Mammary epithelial cell (primary cell): ENCODE measurements at regions of chr10 and their contacts with region 1.

Region 1: GRCh38 chr10:90148116-90148855 is 446.9 kb downstream of the KIF20B start:
- DNase-seq: peak; percentile 78
- H3K4me3 ChIP-seq: no peak overlapping the region
- H3K27ac ChIP-seq: peak overlapping the region; percentile 4
- H3K4me1 ChIP-seq: peaks cover 24% of the 10 kb centered on the region
- H3K27me3 ChIP-seq: no peaks in the 10 kb centered on the region
- CTCF ChIP-seq: peak; percentile 57 to 74

Region 2: GRCh38 chr10:90007226-90007625 is 141.1 kb before region 1 on chr10:
- CTCF ChIA-PET with region 1: no interaction called
- dilution Hi-C with region 1: no loop called
- in situ Hi-C with region 1: loop called in 1 of 2 experiments (anchors 25 kb)
- intact Hi-C with region 1: no loop called
- DNase-seq: peak; percentile 98
- H3K4me3 ChIP-seq: no peak overlapping the region
- H3K27ac ChIP-seq: peak overlapping the region; percentile 92
- H3K4me1 ChIP-seq: peaks cover 18% of the 10 kb centered on the region
- H3K27me3 ChIP-seq: no peaks in the 10 kb centered on the region
- CTCF ChIP-seq: peak; percentile 62 to 89

Region 3: GRCh38 chr10:90062786-90063185 is 85.5 kb before region 1 on chr10:
- CTCF ChIA-PET with region 1: no interaction called
- dilution Hi-C with region 1: no loop called
- in situ Hi-C with region 1: no loop called
- intact Hi-C with region 1: no loop called
- DNase-seq: no peak
- H3K4me3 ChIP-seq: no peak overlapping the region
- H3K27ac ChIP-seq: no peak overlapping the region
- H3K4me1 ChIP-seq: no peaks in the 10 kb centered on the region
- H3K27me3 ChIP-seq: no peaks in the 10 kb centered on the region
- CTCF ChIP-seq: no peak

Region 4: DNA sequence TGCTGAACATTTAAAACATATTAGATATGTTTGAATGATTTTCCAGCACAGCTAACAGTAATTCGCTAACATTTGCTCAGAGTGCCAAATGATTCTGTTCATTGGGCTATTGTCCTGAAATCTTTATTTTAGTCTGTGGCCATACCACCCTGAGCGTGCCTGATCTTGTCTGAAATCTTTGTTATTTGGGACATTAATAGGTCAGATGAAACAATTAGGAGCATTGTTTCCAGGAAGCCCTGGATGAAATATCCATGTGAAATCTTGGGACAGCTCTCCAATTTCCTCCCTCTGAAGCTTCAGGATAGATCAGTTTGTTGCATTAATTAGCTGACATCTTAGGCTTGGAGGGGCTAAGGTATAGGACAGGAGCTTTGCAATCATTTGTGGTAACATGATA is 65.1 kb after region 1 on chr10:
- CTCF ChIA-PET with region 1: no interaction called
- dilution Hi-C with region 1: no loop called
- in situ Hi-C with region 1: no loop called
- intact Hi-C with region 1: no loop called
- DNase-seq: peak; percentile 55
- H3K4me3 ChIP-seq: no peak overlapping the region
- H3K27ac ChIP-seq: no peak overlapping the region
- H3K4me1 ChIP-seq: peaks cover 27% of the 10 kb centered on the region
- H3K27me3 ChIP-seq: no peaks in the 10 kb centered on the region
- CTCF ChIP-seq: no peak

Region 5: GRCh38 chr10:90288391-90288933 is 140.2 kb after region 1 on chr10:
- CTCF ChIA-PET with region 1: no interaction called
- dilution Hi-C with region 1: no loop called
- in situ Hi-C with region 1: no loop called
- intact Hi-C with region 1: loop called (anchors 5 kb)
- DNase-seq: peak; percentile 29
- H3K4me3 ChIP-seq: no peak overlapping the region
- H3K27ac ChIP-seq: no peak overlapping the region
- H3K4me1 ChIP-seq: peaks cover 8% of the 10 kb centered on the region
- H3K27me3 ChIP-seq: no peaks in the 10 kb centered on the region
- CTCF ChIP-seq: peak; percentile 29 to 56

Region 6: DNA sequence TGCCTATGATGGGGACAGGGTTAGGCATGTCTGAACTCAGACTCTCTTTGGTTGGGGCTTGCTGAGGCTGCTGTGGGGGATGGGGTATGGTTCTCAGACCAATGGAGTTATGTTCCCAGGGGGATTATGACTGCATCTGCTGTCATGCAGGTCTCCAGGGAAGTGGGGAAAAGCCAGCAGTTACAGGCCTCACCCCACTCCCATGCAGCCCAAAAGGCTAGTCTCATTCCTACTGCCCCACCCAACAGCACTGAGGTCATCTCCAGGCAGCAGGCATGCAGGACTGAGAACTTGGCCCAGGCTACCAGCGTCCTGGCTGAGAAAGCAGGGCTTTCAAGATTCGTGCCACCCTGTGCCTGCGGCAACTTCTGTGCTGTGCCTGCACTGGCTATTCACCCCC is 336.2 kb after region 1 on chr10:
- CTCF ChIA-PET with region 1: no interaction called
- dilution Hi-C with region 1: no loop called
- in situ Hi-C with region 1: no loop called
- intact Hi-C with region 1: loop called (anchors 10 kb)
- DNase-seq: peak; percentile 86
- H3K4me3 ChIP-seq: no peak overlapping the region
- H3K27ac ChIP-seq: peak overlapping the region; percentile 77
- H3K4me1 ChIP-seq: peaks cover 14% of the 10 kb centered on the region
- H3K27me3 ChIP-seq: no peaks in the 10 kb centered on the region
- CTCF ChIP-seq: no peak

Region 7: DNA sequence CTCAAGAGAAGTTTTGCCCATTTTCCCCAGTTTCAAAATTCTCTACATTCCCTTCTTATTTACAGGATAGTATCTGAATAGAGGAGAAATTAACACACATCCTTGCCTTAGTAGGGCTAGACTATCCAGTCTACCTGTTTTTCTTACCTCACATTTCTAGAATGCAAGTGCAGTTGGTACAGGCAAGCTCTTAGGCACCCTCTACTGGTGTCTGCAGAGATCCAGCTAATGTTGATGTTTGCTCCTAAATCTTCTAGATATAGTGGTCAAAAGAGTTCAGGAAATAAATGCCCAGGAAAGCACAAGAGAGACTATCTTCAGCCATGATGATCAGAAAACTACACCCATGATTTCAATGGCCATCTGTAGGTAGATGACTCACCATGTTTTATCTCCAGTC is 504.2 kb after region 1 on chr10:
- CTCF ChIA-PET with region 1: interaction called, 3 read pairs
- dilution Hi-C with region 1: no loop called
- in situ Hi-C with region 1: no loop called
- intact Hi-C with region 1: loop called (anchors 1 kb)
- DNase-seq: peak; percentile 37
- H3K4me3 ChIP-seq: no peak overlapping the region
- H3K27ac ChIP-seq: no peak overlapping the region
- H3K4me1 ChIP-seq: no peaks in the 10 kb centered on the region
- H3K27me3 ChIP-seq: no peaks in the 10 kb centered on the region
- CTCF ChIP-seq: peak; percentile 60 to 73

Region 8: GRCh38 chr10:90862908-90863514 is 714.7 kb after region 1 on chr10:
- CTCF ChIA-PET with region 1: no interaction called
- dilution Hi-C with region 1: no loop called
- in situ Hi-C with region 1: no loop called
- intact Hi-C with region 1: loop called (anchors 2 kb)
- DNase-seq: peak; percentile 35
- H3K4me3 ChIP-seq: no peak overlapping the region
- H3K27ac ChIP-seq: no peak overlapping the region
- H3K4me1 ChIP-seq: peaks cover 16% of the 10 kb centered on the region
- H3K27me3 ChIP-seq: no peaks in the 10 kb centered on the region
- CTCF ChIP-seq: peak; percentile 81 to 93